ENCODE measurements at regions of chr19 and their contacts with region 1.

Region 1: GRCh38 chr19:5987077-5987818 is 9.3 kb upstream of the RANBP3 start:
- DNase-seq: peak; percentile 89
- H3K4me3 ChIP-seq: peak overlapping the region; percentile 3 to 47 (median 44)
- H3K27ac ChIP-seq: peak overlapping the region in 2 of 4 donors; percentile 36 to 46
- H3K4me1 ChIP-seq: peaks cover 0 to 14% (median 9%) of the 10 kb centered on the region in 4 donors
- H3K27me3 ChIP-seq: no peaks in the 10 kb centered on the region
- CTCF ChIP-seq: peak; percentile 84 to 96 (median 88)
- EP300 ChIP-seq: no peak
- POLR2A ChIP-seq: no peak

Region 2: DNA sequence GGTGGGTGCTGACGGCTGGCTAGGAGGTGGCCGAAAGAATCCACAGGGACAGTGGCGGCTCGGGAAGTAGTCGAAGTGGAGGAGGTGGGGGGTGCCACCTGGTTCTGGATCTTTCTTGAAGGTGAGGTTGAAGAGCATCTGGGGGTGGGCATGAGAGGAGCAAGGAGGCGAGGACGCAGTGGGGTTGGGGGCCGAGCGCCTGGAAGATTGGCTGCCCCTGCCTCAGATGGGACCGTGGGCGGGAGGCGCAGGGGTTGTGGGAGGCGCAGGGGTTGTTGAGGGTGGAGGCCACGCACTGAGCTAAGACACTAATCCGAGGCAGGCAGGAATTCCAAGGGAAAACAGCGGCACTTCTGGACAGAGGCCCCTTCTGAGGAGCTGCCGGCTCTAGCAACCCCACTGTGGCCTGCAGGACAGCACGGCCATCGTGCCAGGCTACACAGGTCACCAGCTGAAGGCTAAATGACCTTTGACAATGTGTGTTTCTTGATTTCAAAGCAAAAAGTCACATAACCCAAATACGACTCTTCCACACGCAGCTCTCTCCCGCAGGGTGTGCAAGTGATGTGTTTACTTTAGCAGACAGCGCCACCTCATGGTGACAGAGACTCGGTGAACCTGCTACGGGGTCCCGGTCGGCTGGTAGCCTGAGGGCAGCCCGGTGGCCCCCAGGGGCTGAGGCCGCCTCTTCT is 34.8 kb after region 1 on chr19:
- intact Hi-C with region 1: loop called (anchors 1 kb)
- DNase-seq: peak; percentile 85
- H3K4me3 ChIP-seq: no peak overlapping the region
- H3K27ac ChIP-seq: peak overlapping the region in 1 of 4 donors; percentile 65
- H3K4me1 ChIP-seq: peaks cover 0 to 7% (median 2%) of the 10 kb centered on the region in 4 donors
- H3K27me3 ChIP-seq: no peaks in the 10 kb centered on the region
- CTCF ChIP-seq: peak; percentile 58 to 67 (median 64)
- EP300 ChIP-seq: no peak
- POLR2A ChIP-seq: no peak

Region 3: GRCh38 chr19:6125571-6125989 is 138.3 kb after region 1 on chr19:
- intact Hi-C with region 1: loop called (anchors 2 kb)
- DNase-seq: peak; percentile 81
- H3K4me3 ChIP-seq: no peak overlapping the region
- H3K27ac ChIP-seq: no peak overlapping the region
- H3K4me1 ChIP-seq: no peaks in the 10 kb centered on the region
- H3K27me3 ChIP-seq: no peaks in the 10 kb centered on the region
- CTCF ChIP-seq: peak; percentile 84 to 96 (median 95)
- EP300 ChIP-seq: no peak
- POLR2A ChIP-seq: no peak